Gastrocnemius medialis (tissue), 4 donors: ENCODE measurements at regions of chr9 and their contacts with region 1.

Region 1: DNA sequence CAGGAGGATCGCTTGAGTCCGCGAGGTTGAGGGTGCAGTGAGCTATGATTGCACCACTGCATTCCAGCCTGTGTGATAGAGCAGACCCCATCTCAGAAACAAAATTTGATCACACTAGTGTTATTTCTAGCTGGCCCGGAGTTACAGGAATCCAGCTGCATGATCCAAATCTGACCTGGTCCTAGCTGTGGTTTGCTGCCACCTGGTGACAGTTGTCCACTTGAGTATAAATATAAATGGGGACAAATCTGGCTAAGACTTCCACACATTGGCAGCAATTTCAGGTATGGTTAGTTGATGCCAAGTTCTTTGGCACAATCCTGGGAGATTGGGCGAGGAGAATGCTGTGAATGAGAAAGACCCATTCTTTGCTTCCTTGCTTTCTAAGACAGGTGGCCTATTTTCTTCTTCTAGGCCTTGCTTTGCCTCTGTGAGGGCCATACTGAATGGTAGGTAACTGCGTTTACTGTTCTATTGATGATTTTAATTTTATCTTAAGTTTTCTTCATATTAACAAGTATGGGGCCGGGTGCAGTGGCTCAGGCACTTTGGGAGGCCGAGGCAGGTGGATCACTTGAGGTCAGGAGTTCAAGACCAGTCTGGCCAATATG is 35.4 kb downstream of the UBE2R2 start:
- DNase-seq: peak; percentile 60 to 76
- ATAC-seq: peak; percentile 78 to 87
- H3K4me3 ChIP-seq: no peak overlapping the region
- H3K27ac ChIP-seq: peak overlapping the region; percentile 48 to 77 (median 66)
- H3K4me1 ChIP-seq: peaks cover 38 to 48% of the 10 kb centered on the region in 2 donors
- H3K27me3 ChIP-seq: no peaks in the 10 kb centered on the region
- CTCF ChIP-seq: peak; percentile 58 to 84 (median 81)
- POLR2A ChIP-seq: no peak

Region 2: DNA sequence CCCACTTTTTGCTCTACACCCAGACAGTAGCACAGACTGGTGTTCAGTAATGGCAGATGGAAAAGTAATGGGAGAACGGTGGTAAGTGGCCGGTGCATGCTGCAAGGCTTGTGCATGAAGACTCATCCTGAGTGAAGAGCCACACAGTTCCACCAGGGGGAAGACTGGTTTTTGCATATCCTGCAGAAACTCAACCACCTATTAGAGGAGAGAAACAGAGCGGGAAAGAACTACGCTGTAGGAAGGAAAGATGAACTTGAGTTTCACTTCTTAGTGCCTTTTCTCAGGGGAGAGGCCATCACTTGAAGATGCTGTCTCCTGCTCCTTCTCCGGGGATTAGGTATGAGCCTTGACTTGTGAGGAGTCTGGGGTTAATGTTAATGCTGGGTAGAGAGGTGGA is 66.4 kb before region 1 on chr9:
- in situ Hi-C with region 1: no loop called
- intact Hi-C with region 1: loop called (anchors 2 kb)
- DNase-seq: no peak
- ATAC-seq: no peak
- H3K4me3 ChIP-seq: no peak overlapping the region
- H3K27ac ChIP-seq: no peak overlapping the region
- H3K4me1 ChIP-seq: peaks cover 14 to 16% of the 10 kb centered on the region in 2 donors
- H3K27me3 ChIP-seq: no peaks in the 10 kb centered on the region
- CTCF ChIP-seq: no peak
- POLR2A ChIP-seq: no peak

Region 3: GRCh38 chr9:33816327-33817252 is 35.7 kb before region 1 on chr9 and contains the start of gene UBE2R2:
- in situ Hi-C with region 1: loop called in 3 of 4 experiments (anchors 5 kb)
- intact Hi-C with region 1: loop called (anchors 1 kb)
- DNase-seq: peak; percentile 87 to 91
- ATAC-seq: peak; percentile 65 to 76
- H3K4me3 ChIP-seq: peak within 1 kb of the TSS; percentile 80 to 94 (median 90)
- H3K27ac ChIP-seq: peak within 1 kb of the TSS; percentile 92 to 100 (median 98)
- H3K4me1 ChIP-seq: peaks cover 45 to 52% of the 10 kb centered on the region in 2 donors
- H3K27me3 ChIP-seq: no peaks in the 10 kb centered on the region
- CTCF ChIP-seq: no peak
- POLR2A ChIP-seq: peak; percentile 75 to 79
- total RNA-seq, gene UBE2R2: 32.5 to 47.3 (median 41.9) TPM